Activated naive CD4-positive, alpha-beta T cell treated with anti-CD3 and anti-CD28 coated beads for 36 hours (primary cell): ENCODE measurements at regions of chr6 and their contacts with region 1.

Region 1: DNA sequence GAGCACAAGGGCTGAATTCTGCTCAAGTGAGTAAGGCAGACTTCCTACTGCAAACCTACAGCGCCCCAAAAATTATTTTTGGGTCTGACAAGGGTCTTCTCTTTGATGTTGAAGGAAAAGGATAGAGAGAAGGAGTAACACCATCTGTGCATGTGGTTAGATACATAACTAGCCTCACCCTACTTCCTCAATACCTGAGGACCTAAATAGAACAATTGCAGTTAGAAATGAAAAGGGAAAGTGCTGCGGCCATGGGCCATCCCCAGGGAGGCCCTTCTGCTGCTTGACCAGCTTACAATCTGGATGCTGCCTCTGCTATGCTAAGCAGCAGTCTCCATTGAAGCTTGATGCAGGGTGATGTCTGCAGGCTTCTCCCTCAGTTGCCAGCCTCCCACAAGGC is 63.2 kb upstream of the ARMH2 start:
- DNase-seq: no peak
- H3K4me3 Mint-ChIP-seq: peak overlapping the region; percentile 33
- H3K27ac Mint-ChIP-seq: peak overlapping the region; percentile 82
- H3K4me1 Mint-ChIP-seq: peaks cover 92% of the 10 kb centered on the region
- H3K27me3 Mint-ChIP-seq: no peaks in the 10 kb centered on the region

Region 2: DNA sequence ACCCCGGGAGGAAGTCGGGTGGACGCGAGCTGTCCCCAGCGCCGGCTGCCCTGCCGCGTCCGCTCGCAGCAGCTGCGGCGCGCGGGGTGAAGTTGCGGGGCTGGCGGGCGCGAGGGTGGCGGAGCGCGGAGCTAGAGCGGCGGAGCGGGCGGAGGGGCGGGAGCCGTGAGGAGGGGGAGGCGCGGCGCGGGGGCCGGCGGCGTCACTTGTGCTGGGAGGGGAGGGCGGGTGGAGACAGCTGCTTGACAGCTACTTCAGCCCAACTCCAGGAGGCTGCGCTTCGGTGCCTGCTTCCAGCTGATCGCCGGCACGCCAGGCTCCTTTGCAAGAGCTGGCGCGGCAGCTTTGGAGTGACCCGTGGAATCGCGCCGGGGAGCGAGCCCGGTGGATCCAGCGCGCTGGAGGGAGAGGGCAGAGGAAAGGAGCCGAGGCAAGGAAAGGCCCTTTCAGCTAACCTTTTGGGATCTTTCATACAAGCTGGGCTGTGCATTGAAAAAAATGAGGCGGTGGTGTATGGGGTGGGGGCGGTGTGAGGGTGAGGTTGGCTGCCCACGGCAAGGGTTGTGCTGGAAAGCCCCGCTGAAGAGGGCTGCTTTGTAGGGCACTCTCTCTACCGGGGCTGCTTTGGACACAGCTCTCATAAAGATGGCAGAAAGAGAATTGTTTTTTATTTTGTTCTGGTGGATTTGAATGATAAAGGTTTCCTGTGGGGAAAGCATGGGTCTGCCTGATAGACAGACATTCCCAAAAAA is 49.2 kb after region 1 on chr6:
- CTCF ChIA-PET with region 1: interaction called, 58 read pairs
- intact Hi-C with region 1: no loop called
- DNase-seq: peak; percentile 70
- H3K4me3 Mint-ChIP-seq: peak overlapping the region; percentile 92
- H3K27ac Mint-ChIP-seq: peak overlapping the region; percentile 96
- H3K4me1 Mint-ChIP-seq: peaks cover 76% of the 10 kb centered on the region
- H3K27me3 Mint-ChIP-seq: no peaks in the 10 kb centered on the region